ENCODE measurements at regions of chr1 and their contacts with region 1.

Region 1: GRCh38 chr1:215321802-215322201 is 239.3 kb downstream of the KCNK2 start:
- DNase-seq: no peak
- H3K4me3 ChIP-seq: no peak overlapping the region
- H3K27ac ChIP-seq: no peak overlapping the region
- H3K4me1 ChIP-seq: no peaks in the 10 kb centered on the region
- H3K27me3 ChIP-seq: no peaks in the 10 kb centered on the region
- CTCF ChIP-seq: no peak

Region 2: GRCh38 chr1:215393481-215393880 is 71.7 kb after region 1 on chr1:
- dilution Hi-C with region 1: loop called (anchors 5 kb)
- DNase-seq: no peak
- H3K4me3 ChIP-seq: no peak overlapping the region
- H3K27ac ChIP-seq: no peak overlapping the region
- H3K4me1 ChIP-seq: no peaks in the 10 kb centered on the region
- H3K27me3 ChIP-seq: no peaks in the 10 kb centered on the region
- CTCF ChIP-seq: no peak

Measured in keratinocyte (primary cell).